ENCODE measurements at regions of chr17 and their contacts with region 1.

Region 1: GRCh38 chr17:50865984-50866774 is at the start of gene TOB1:
- DNase-seq: peak; percentile 94
- H3K4me3 Mint-ChIP-seq: peak within 1 kb of the TSS; percentile 100
- H3K27ac Mint-ChIP-seq: peak within 1 kb of the TSS; percentile 99
- H3K4me1 Mint-ChIP-seq: peaks cover 60% of the 10 kb centered on the region
- H3K27me3 Mint-ChIP-seq: peaks cover 2% of the 10 kb centered on the region
- total RNA-seq, gene TOB1: 29.6 and 35.5 TPM in 2 replicates

Region 2: GRCh38 chr17:50707289-50708049 is 158.7 kb before region 1 on chr17 and contains the start of gene ANKRD40:
- intact Hi-C with region 1: loop called (anchors 1 kb)
- DNase-seq: peak; percentile 90
- H3K4me3 Mint-ChIP-seq: peak within 1 kb of the TSS; percentile 95
- H3K27ac Mint-ChIP-seq: peak within 1 kb of the TSS; percentile 97
- H3K4me1 Mint-ChIP-seq: peaks cover 40% of the 10 kb centered on the region
- H3K27me3 Mint-ChIP-seq: peaks cover 3% of the 10 kb centered on the region
- total RNA-seq, gene ANKRD40: 47.0 and 50.3 TPM in 2 replicates

Region 3: GRCh38 chr17:50919321-50920085 is 53.3 kb after region 1 on chr17:
- intact Hi-C with region 1: loop called (anchors 1 kb)
- DNase-seq: peak; percentile 81
- H3K4me3 Mint-ChIP-seq: peak overlapping the region; percentile 49
- H3K27ac Mint-ChIP-seq: peak overlapping the region; percentile 98
- H3K4me1 Mint-ChIP-seq: peaks cover 27% of the 10 kb centered on the region
- H3K27me3 Mint-ChIP-seq: peaks cover 3% of the 10 kb centered on the region

Region 4: GRCh38 chr17:50944054-50944901 is 78.1 kb after region 1 on chr17:
- intact Hi-C with region 1: loop called (anchors 1 kb)
- DNase-seq: peak; percentile 76
- H3K4me3 Mint-ChIP-seq: peak overlapping the region; percentile 79
- H3K27ac Mint-ChIP-seq: peak overlapping the region; percentile 75
- H3K4me1 Mint-ChIP-seq: peaks cover 30% of the 10 kb centered on the region
- H3K27me3 Mint-ChIP-seq: peaks cover 2% of the 10 kb centered on the region

Region 5: GRCh38 chr17:51120739-51121617 is 254.8 kb after region 1 on chr17 and contains the start of gene SPAG9:
- intact Hi-C with region 1: loop called (anchors 1 kb)
- DNase-seq: peak; percentile 93
- H3K4me3 Mint-ChIP-seq: peak within 1 kb of the TSS; percentile 97
- H3K27ac Mint-ChIP-seq: peak within 1 kb of the TSS; percentile 99
- H3K4me1 Mint-ChIP-seq: peaks cover 55% of the 10 kb centered on the region
- H3K27me3 Mint-ChIP-seq: peaks cover 2% of the 10 kb centered on the region
- total RNA-seq, gene SPAG9: 44.1 and 45.2 TPM in 2 replicates

Region 6: DNA sequence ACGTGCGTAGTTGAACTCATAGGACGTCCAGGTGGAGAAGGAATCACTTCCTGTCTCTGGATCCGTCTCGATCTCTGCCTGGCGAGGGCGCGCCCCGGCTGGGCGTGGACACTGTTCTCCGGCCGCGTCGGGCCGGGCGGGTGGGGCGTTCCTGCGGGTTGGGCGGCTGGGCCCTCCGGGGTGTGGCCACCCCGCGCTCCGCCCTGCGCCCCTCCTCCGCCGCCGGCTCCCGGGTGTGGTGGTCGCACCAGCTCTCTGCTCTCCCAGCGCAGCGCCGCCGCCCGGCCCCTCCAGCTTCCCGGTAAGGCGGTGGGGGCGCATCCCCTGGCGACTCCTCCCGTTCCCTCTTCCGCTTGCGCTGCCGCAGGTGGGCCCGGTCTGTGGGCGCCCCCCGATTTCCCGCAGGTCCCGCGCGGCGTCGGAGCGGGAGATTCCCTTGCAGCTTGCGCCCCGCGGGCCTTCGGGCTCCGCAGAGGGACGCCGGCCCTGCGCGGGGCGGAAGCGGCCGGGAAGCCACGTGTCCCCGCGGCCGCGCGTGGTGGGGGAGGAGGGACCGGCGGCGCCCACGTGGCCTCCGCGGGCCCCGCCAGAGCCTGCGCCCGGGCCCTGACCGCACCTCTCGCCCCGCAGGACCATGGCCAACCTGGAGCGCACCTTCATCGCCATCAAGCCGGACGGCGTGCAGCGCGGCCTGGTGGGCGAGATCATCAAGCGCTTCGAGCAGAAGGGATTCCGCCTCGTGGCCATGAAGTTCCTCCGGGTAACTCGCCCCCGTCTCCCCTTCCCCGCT is 300.2 kb after region 1 on chr17 and contains the start of gene NME2:
- intact Hi-C with region 1: loop called (anchors 1 kb)
- DNase-seq: peak; percentile 69
- H3K4me3 Mint-ChIP-seq: peak within 1 kb of the TSS; percentile 98
- H3K27ac Mint-ChIP-seq: peak within 1 kb of the TSS; percentile 98
- H3K4me1 Mint-ChIP-seq: peaks cover 32% of the 10 kb centered on the region
- H3K27me3 Mint-ChIP-seq: peaks cover 1% of the 10 kb centered on the region
- total RNA-seq, gene NME2: 664 and 674 TPM in 2 replicates

Measured in activated T-helper 1 cell treated with anti-CD3 and anti-CD28 coated beads, Interleukin-12 subunit alpha, Interleukin-12 subunit beta, Interleukin-2, Interleukin-4 antibody, amounts not matched to agents 30 ng/mL and 10 ng/mL and 1 ng/mL, durations not matched to agents 14 hours and 24 hours and 36 hours (primary cell).